Activated T-helper 2 cell treated with anti-CD3 and anti-CD28 coated beads, Interferon-gamma antibody, Interleukin-2, Interleukin-4, amounts not matched to agents 10 μg/mL and 5 μg/mL and 100 μg/mL, durations not matched to agents 14 hours and 24 hours and 36 hours (primary cell): ENCODE measurements at regions of chr1 and their contacts with region 1.

Region 1: GRCh38 chr1:243325305-243325890 is 69.6 kb downstream of the SDCCAG8 start:
- DNase-seq: no peak
- H3K4me3 Mint-ChIP-seq: no peak overlapping the region
- H3K27ac Mint-ChIP-seq: no peak overlapping the region
- H3K4me1 Mint-ChIP-seq: no peaks in the 10 kb centered on the region
- H3K27me3 Mint-ChIP-seq: no peaks in the 10 kb centered on the region

Region 2: DNA sequence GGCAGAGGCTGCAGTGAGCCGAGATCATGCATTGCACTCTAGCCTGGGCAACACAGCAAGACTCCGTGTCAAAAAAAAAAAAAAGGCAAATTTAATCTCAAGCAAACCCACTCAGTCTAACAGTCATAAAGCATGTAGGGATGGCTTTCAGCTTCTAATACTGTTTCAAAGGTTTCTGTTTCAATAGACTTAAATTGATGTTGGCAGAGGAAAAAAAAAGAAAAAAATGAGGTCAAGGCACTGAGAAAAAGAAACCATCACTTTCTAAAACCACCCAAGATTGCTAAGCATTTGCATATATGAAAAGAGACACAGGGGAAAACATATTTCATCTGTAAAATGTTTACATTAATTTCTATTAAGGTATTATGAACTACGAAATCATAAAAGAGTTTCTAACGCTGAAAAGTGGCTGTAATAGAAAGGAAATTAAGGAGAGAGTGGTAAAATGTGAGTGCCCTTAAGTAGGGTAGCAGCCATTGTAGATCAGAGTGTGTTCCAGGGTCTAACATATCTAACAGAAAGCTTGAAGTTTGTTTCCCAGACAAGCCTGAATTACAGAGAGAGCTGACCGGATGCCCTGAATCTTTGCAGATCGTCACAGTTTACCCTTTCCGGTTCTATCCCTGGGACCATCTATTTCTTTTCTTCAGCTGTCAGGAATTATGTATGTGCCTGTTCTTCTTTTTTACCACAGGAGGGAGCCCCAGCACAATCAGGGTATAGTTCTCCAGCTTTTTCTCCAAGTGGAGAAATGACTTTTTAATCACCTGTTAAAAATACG is 870.9 kb before region 1 on chr1:
- intact Hi-C with region 1: loop called (anchors 5 kb)
- DNase-seq: no peak
- H3K4me3 Mint-ChIP-seq: no peak overlapping the region
- H3K27ac Mint-ChIP-seq: no peak overlapping the region
- H3K4me1 Mint-ChIP-seq: no peaks in the 10 kb centered on the region
- H3K27me3 Mint-ChIP-seq: no peaks in the 10 kb centered on the region

Region 3: GRCh38 chr1:242651817-242652216 is 673.6 kb before region 1 on chr1:
- intact Hi-C with region 1: loop called (anchors 10 kb)
- DNase-seq: no peak
- H3K4me3 Mint-ChIP-seq: no peak overlapping the region
- H3K27ac Mint-ChIP-seq: no peak overlapping the region
- H3K4me1 Mint-ChIP-seq: no peaks in the 10 kb centered on the region
- H3K27me3 Mint-ChIP-seq: no peaks in the 10 kb centered on the region

Region 4: GRCh38 chr1:243312952-243313634 is 12.3 kb before region 1 on chr1:
- intact Hi-C with region 1: no loop called
- DNase-seq: no peak
- H3K4me3 Mint-ChIP-seq: no peak overlapping the region
- H3K27ac Mint-ChIP-seq: no peak overlapping the region
- H3K4me1 Mint-ChIP-seq: peaks cover 4% of the 10 kb centered on the region
- H3K27me3 Mint-ChIP-seq: no peaks in the 10 kb centered on the region

Region 5: DNA sequence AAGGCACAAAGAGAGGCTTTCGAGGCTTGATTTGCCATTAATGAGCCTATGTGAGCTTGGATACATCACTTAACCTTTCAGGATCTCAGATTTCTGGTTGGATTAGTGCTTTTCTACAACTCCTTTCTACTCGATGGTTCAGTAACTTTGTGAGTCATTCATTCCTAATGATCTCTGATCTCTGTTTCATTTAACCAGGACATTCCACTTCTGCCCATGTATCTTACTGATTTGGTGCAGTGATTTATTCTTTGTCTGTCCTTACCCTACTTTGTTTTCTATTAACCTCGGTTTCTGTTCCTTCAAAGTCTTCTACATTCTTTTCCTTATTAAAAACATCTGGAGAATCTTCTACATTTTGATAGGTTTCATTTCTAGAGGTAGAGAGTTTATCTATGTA is 631.1 kb after region 1 on chr1:
- intact Hi-C with region 1: no loop called
- DNase-seq: no peak
- H3K4me3 Mint-ChIP-seq: no peak overlapping the region
- H3K27ac Mint-ChIP-seq: no peak overlapping the region
- H3K4me1 Mint-ChIP-seq: no peaks in the 10 kb centered on the region
- H3K27me3 Mint-ChIP-seq: peaks cover 15% of the 10 kb centered on the region